ENCODE measurements at regions of chrX and their contacts with region 1.

Region 1: DNA sequence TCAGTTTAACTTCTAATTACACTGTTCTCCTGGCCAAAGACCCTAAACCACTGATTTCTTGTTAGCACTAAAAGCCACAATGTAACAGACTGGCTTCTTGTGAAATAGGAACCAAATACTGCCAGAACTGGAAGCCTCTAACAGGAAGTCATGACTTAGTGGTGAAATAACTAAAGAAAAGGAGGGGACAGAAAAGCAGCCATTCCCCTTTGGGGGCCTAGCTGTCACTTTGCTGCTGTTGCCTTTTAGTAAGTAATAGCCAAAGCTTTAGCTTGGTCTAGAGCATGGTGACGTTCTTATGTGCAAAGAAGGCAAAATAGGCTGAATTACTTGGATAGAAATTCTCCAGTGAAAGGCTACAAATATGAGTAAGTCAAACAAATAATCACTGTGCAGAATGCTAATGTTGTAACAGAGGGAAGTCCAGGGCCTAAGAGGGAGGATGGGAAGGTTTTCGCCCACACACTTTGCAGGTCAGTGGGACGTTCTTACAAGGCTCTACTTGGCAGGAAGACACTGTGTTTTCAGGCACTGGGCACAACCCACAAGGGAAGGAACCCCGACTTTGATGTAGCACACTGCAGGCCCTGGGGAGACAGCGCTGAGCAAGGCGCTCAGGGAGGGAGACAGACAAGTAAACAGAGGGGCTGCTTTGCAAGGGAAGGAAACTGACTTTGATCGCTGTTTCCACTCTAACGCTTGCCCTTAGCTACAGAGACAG is 16.7 kb downstream of the GAB3 start:
- DNase-seq: peak; percentile 17 to 66 (median 57)
- H3K4me3 ChIP-seq: peak overlapping the region; percentile 43
- H3K4me3 Mint-ChIP-seq: peak overlapping the region; percentile 66 to 84 (median 81)
- H3K27ac ChIP-seq: peak overlapping the region; percentile 61
- H3K27ac Mint-ChIP-seq: peak overlapping the region; percentile 87 to 98 (median 93)
- H3K4me1 ChIP-seq: peaks cover 90% of the 10 kb centered on the region
- H3K4me1 Mint-ChIP-seq: peaks cover 95 to 98% (median 98%) of the 10 kb centered on the region in 3 donors
- H3K27me3 ChIP-seq: no peaks in the 10 kb centered on the region
- H3K27me3 Mint-ChIP-seq: peaks cover 0 to 1% of the 10 kb centered on the region in 2 donors

Region 2: GRCh38 chrX:154370882-154371770 is 363.1 kb before region 1 on chrX:
- CTCF ChIA-PET with region 1: no interaction called
- POLR2A ChIA-PET with region 1: no interaction called
- DNase-seq: peak; percentile 85 to 96 (median 89)
- H3K4me3 ChIP-seq: peak overlapping the region; percentile 94
- H3K4me3 Mint-ChIP-seq: peak overlapping the region; percentile 82 to 97 (median 86)
- H3K27ac ChIP-seq: peak overlapping the region; percentile 99
- H3K27ac Mint-ChIP-seq: peak overlapping the region; percentile 73 to 100 (median 82)
- H3K4me1 ChIP-seq: peaks cover 48% of the 10 kb centered on the region
- H3K4me1 Mint-ChIP-seq: peaks cover 34 to 39% (median 36%) of the 10 kb centered on the region in 3 donors
- H3K27me3 ChIP-seq: no peaks in the 10 kb centered on the region
- H3K27me3 Mint-ChIP-seq: peaks cover 0 to 8% of the 10 kb centered on the region in 2 donors

Region 3: GRCh38 chrX:154596290-154596929 is 137.8 kb before region 1 on chrX:
- CTCF ChIA-PET with region 1: no interaction called
- POLR2A ChIA-PET with region 1: no interaction called
- DNase-seq: no peak
- H3K4me3 ChIP-seq: no peak overlapping the region
- H3K4me3 Mint-ChIP-seq: no peak overlapping the region
- H3K27ac ChIP-seq: no peak overlapping the region
- H3K27ac Mint-ChIP-seq: no peak overlapping the region
- H3K4me1 ChIP-seq: no peaks in the 10 kb centered on the region
- H3K4me1 Mint-ChIP-seq: peaks cover 8 to 13% (median 10%) of the 10 kb centered on the region in 3 donors
- H3K27me3 ChIP-seq: no peaks in the 10 kb centered on the region
- H3K27me3 Mint-ChIP-seq: peaks cover 0 to 9% of the 10 kb centered on the region in 2 donors

Region 4: GRCh38 chrX:154717824-154718223 is 16.4 kb before region 1 on chrX:
- CTCF ChIA-PET with region 1: interaction called, 13 read pairs
- POLR2A ChIA-PET with region 1: interaction called, 5 read pairs
- DNase-seq: peak; percentile 9 to 55 (median 35)
- H3K4me3 ChIP-seq: no peak overlapping the region
- H3K4me3 Mint-ChIP-seq: peak overlapping the region; percentile 62 to 82 (median 66)
- H3K27ac ChIP-seq: peak overlapping the region; percentile 70
- H3K27ac Mint-ChIP-seq: peak overlapping the region; percentile 64 to 95 (median 88)
- H3K4me1 ChIP-seq: peaks cover 48% of the 10 kb centered on the region
- H3K4me1 Mint-ChIP-seq: peaks cover 52 to 88% (median 66%) of the 10 kb centered on the region in 3 donors
- H3K27me3 ChIP-seq: no peaks in the 10 kb centered on the region
- H3K27me3 Mint-ChIP-seq: no peaks in the 10 kb centered on the region

Region 5: DNA sequence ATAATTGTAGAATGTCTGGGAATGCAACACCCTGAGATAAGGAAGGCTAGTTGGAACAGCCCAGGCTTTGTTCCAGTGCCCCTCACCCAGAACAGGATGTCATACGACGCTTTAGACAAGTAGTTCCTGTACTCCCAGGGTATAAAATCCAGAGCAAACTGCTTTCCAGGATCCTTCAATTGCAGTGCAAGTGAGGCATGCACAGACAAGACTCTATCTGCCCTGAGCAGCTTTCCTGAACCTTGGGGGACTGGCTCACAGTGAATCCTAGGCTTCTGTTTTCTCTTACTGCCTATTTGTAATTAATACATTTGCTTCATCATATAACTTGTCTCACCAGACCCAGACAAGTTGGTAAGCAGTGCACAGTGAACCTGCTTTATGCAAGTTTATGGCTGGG is 1214.9 kb after region 1 on chrX:
- CTCF ChIA-PET with region 1: no interaction called
- POLR2A ChIA-PET with region 1: no interaction called
- DNase-seq: no peak
- H3K4me3 ChIP-seq: no peak overlapping the region
- H3K4me3 Mint-ChIP-seq: no peak overlapping the region
- H3K27ac ChIP-seq: no peak overlapping the region
- H3K27ac Mint-ChIP-seq: no peak overlapping the region
- H3K4me1 ChIP-seq: no peaks in the 10 kb centered on the region
- H3K4me1 Mint-ChIP-seq: no peaks in the 10 kb centered on the region
- H3K27me3 ChIP-seq: no peaks in the 10 kb centered on the region
- H3K27me3 Mint-ChIP-seq: no peaks in the 10 kb centered on the region

Measured in CD8-positive, alpha-beta memory T cell (primary cell).